Left ventricle myocardium superior (tissue), 1 donor: ENCODE measurements at regions of chr3 and their contacts with region 1.

Region 1: GRCh38 chr3:9514956-9515355 is 38.7 kb downstream of the LHFPL4 start:
- DNase-seq: no peak
- ATAC-seq: no peak

Region 2: DNA sequence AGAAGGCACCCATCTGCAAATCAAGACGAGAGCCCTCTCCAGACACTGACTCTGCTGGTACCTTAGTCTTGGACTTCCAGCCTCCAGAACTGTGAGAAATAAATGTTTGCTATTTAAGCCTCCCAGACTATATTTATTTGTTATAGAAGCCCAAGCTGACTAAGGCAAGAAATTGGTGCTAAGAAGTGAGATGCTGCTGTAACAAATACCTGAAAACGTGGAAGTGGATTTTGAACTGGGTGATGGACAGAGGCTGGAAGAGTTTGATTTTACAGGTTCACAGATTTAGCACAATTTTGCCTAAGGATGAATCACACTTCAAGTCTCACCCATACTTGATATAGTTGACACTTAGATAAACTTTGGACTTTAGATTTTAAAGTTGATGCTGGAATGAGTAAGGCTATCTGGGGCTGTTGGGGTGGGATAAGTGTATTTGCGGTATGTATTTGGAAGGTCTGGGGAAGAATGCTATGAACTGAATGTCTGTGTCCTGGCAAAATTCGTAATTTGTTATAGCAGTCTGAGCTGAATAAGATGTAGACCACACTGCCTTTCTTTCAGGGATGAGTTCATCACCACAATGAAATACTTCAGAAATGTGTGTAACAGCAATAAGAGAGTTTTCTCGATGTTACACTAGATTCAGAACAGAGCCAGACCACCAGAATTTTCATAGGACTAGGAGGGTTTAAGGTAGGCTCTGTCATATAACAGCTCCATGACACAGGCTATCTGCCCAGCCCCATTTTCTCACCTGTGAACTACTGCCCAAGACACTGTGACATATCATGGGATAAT is 1133.9 kb before region 1 on chr3:
- intact Hi-C with region 1: no loop called
- DNase-seq: no peak
- ATAC-seq: no peak

Region 3: GRCh38 chr3:9387322-9387655 is 127.7 kb before region 1 on chr3:
- intact Hi-C with region 1: no loop called
- DNase-seq: no peak
- ATAC-seq: no peak

Region 4: DNA sequence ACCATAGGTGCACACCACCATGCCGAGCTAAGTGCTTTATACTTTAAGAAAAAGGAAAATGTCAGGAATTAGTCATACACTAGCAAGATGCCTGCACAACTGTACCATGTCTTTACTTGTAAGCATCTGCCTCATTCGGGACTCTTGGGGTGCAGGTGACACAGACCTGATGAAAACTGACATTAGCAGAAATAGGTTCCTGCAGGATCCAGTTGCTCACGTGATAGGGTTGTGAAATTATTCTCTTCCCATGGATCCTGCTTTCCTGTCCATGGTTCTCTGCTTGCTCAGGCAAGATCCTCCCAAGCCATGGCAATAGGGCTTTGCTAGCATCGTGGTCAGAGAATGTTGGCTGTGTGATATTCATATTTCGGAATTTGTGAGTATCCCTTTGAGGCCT is 48.9 kb after region 1 on chr3:
- intact Hi-C with region 1: loop called (anchors 2 kb)
- DNase-seq: no peak
- ATAC-seq: no peak